ENCODE measurements at regions of chr20 and their contacts with region 1.

Region 1: GRCh38 chr20:8853805-8854338 is 215.0 kb upstream of the PLCB4 start:
- DNase-seq: peak; percentile 64
- H3K4me3 ChIP-seq: peak overlapping the region; percentile 36
- H3K27ac ChIP-seq: peak overlapping the region; percentile 75
- H3K27me3 ChIP-seq: no peaks in the 10 kb centered on the region
- CTCF ChIP-seq: peak; percentile 91

Region 2: GRCh38 chr20:8808202-8808535 is 45.7 kb before region 1 on chr20:
- CTCF ChIA-PET with region 1: interaction called, 12 read pairs
- POLR2A ChIA-PET with region 1: no interaction called
- DNase-seq: no peak
- H3K4me3 ChIP-seq: no peak overlapping the region
- H3K27ac ChIP-seq: no peak overlapping the region
- H3K27me3 ChIP-seq: no peaks in the 10 kb centered on the region
- CTCF ChIP-seq: no peak

Region 3: DNA sequence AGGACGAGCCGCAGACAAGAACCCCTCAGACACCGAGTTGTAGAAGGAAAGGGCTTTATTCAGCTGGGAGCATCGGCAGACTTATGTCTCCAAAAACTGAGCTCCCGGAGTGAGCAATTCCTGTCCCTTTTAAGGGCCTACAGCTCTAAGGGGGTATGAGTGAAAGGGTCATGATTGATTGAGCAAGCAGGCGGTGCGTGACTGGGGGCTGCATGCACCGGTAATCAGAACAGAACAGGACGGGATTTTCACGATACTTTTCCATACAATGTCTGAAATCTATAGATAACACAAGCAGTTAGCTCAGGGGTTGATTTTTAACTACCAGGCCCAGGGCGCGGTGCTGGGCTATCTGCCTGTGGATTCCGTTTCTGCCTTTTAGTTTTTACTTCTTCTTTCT is 11.3 kb before region 1 on chr20:
- CTCF ChIA-PET with region 1: interaction called, 37 read pairs
- POLR2A ChIA-PET with region 1: no interaction called
- DNase-seq: no peak
- H3K4me3 ChIP-seq: no peak overlapping the region
- H3K27ac ChIP-seq: no peak overlapping the region
- H3K27me3 ChIP-seq: no peaks in the 10 kb centered on the region
- CTCF ChIP-seq: no peak

Region 4: GRCh38 chr20:9093218-9093957 is 239.5 kb after region 1 on chr20:
- CTCF ChIA-PET with region 1: interaction called, 15 read pairs
- POLR2A ChIA-PET with region 1: no interaction called
- DNase-seq: no peak
- H3K4me3 ChIP-seq: no peak overlapping the region
- H3K27ac ChIP-seq: no peak overlapping the region
- H3K27me3 ChIP-seq: no peaks in the 10 kb centered on the region
- CTCF ChIP-seq: no peak

Region 5: GRCh38 chr20:9353180-9353915 is 499.5 kb after region 1 on chr20:
- CTCF ChIA-PET with region 1: interaction called, 20 read pairs
- POLR2A ChIA-PET with region 1: no interaction called
- DNase-seq: no peak
- H3K4me3 ChIP-seq: no peak overlapping the region
- H3K27ac ChIP-seq: no peak overlapping the region
- H3K27me3 ChIP-seq: no peaks in the 10 kb centered on the region
- CTCF ChIP-seq: no peak; the same call in 1 of the 2 replicates

Region 6: GRCh38 chr20:9392892-9393857 is 539.3 kb after region 1 on chr20:
- CTCF ChIA-PET with region 1: interaction called, 55 read pairs
- POLR2A ChIA-PET with region 1: interaction called, 5 read pairs
- DNase-seq: no peak
- H3K4me3 ChIP-seq: no peak overlapping the region
- H3K27ac ChIP-seq: no peak overlapping the region
- H3K27me3 ChIP-seq: no peaks in the 10 kb centered on the region
- CTCF ChIP-seq: peak; percentile 92

Measured in AG04450 (cell line).